ENCODE measurements at regions of chr20 and their contacts with region 1.

Region 1: GRCh38 chr20:34538671-34539123 is 19.8 kb upstream of the MAP1LC3A start:
- DNase-seq: peak; percentile 66
- CTCF ChIP-seq: peak; percentile 89

Region 2: DNA sequence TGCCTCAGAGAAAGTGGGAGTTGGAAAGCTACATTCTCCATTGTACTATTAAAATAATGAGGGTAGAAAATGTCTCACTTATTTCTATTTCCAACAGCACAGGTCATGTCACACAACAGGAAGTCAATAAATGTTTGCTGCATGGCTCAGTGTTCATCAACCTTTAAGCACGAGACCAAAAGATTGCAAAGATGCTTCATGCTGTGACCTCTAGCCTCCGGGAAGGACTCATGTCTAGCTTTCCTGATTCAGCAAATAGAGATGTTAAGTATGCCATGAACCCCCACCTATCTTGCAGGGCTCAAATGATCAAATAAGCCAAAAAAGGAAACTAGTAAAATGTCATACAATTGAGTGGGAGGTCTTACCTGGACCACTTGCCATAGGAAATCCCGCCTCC is 229.4 kb after region 1 on chr20:
- in situ Hi-C with region 1: loop called (anchors 10 kb)
- DNase-seq: no peak
- CTCF ChIP-seq: no peak

Measured in GM13977 (cell line).